Activated CD4-positive, alpha-beta memory T cell treated with anti-CD3 and anti-CD28 coated beads for 36 hours (primary cell): ENCODE measurements at regions of chr4 and their contacts with region 1.

Region 1: GRCh38 chr4:105520817-105521790 is 31.3 kb upstream of the ARHGEF38 start:
- DNase-seq: no peak
- H3K4me3 Mint-ChIP-seq: no peak overlapping the region
- H3K27ac Mint-ChIP-seq: no peak overlapping the region
- H3K4me1 Mint-ChIP-seq: no peaks in the 10 kb centered on the region
- H3K27me3 Mint-ChIP-seq: peaks cover 6% of the 10 kb centered on the region

Region 2: DNA sequence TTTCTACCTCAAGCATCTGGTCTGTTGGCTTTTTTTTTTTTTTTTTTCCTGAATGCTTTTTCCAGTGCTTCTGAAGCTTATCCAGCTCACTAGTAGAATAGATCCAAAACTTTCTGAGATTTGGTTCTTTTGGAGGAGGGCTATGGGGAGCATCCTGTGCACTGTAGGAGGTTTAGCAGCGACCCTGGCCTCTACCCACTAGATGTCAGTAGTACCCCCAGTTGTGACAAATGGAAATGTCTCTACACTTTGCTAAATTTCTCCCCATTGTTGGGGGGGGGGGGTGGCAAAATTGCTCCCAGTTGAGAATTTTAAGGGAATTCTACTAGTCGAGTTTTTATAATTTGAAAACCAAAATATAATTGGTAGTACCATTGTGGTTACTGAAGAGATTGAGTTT is 24.2 kb before region 1 on chr4:
- CTCF ChIA-PET with region 1: no interaction called
- POLR2A ChIA-PET with region 1: no interaction called
- intact Hi-C with region 1: no loop called
- DNase-seq: no peak
- H3K4me3 Mint-ChIP-seq: no peak overlapping the region
- H3K27ac Mint-ChIP-seq: no peak overlapping the region
- H3K4me1 Mint-ChIP-seq: no peaks in the 10 kb centered on the region
- H3K27me3 Mint-ChIP-seq: peaks cover 8% of the 10 kb centered on the region

Region 3: GRCh38 chr4:105631818-105632400 is 110.8 kb after region 1 on chr4:
- CTCF ChIA-PET with region 1: interaction called, 14 read pairs
- POLR2A ChIA-PET with region 1: no interaction called
- intact Hi-C with region 1: loop called (anchors 2 kb)
- DNase-seq: no peak
- H3K4me3 Mint-ChIP-seq: no peak overlapping the region
- H3K27ac Mint-ChIP-seq: no peak overlapping the region
- H3K4me1 Mint-ChIP-seq: no peaks in the 10 kb centered on the region
- H3K27me3 Mint-ChIP-seq: peaks cover 7% of the 10 kb centered on the region

Region 4: GRCh38 chr4:105715692-105716278 is 194.7 kb after region 1 on chr4:
- CTCF ChIA-PET with region 1: interaction called, 3 read pairs
- POLR2A ChIA-PET with region 1: no interaction called
- intact Hi-C with region 1: loop called (anchors 1 kb)
- DNase-seq: no peak
- H3K4me3 Mint-ChIP-seq: no peak overlapping the region
- H3K27ac Mint-ChIP-seq: no peak overlapping the region
- H3K4me1 Mint-ChIP-seq: peaks cover 3% of the 10 kb centered on the region
- H3K27me3 Mint-ChIP-seq: no peaks in the 10 kb centered on the region